ENCODE measurements at regions of chr2 and their contacts with region 1.

Region 1: GRCh38 chr2:190180313-190181122 is 118.0 kb upstream of the MSTN start:
- DNase-seq: peak; percentile 88
- H3K4me3 ChIP-seq: peak overlapping the region; percentile 62 to 66
- H3K27ac ChIP-seq: no peak overlapping the region; a peak in 1 of 4 replicates
- H3K4me1 ChIP-seq: peaks cover 0 to 12% of the 10 kb centered on the region in 2 experiments; a peak in 2 of 4 replicates
- H3K27me3 ChIP-seq: no peaks in the 10 kb centered on the region
- CTCF ChIP-seq: peak; percentile 45
- EP300 ChIP-seq: no peak
- RAD21 ChIP-seq: no peak

Region 2: GRCh38 chr2:189880832-189881492 is 299.6 kb before region 1 on chr2:
- CTCF ChIA-PET with region 1: no interaction called
- POLR2A ChIA-PET with region 1: no interaction called
- DNase-seq: no peak
- H3K4me3 ChIP-seq: no peak overlapping the region
- H3K27ac ChIP-seq: no peak overlapping the region
- H3K4me1 ChIP-seq: no peaks in the 10 kb centered on the region; a peak in 1 of 4 replicates
- H3K27me3 ChIP-seq: no peaks in the 10 kb centered on the region
- CTCF ChIP-seq: no peak
- EP300 ChIP-seq: no peak
- RAD21 ChIP-seq: no peak

Region 3: DNA sequence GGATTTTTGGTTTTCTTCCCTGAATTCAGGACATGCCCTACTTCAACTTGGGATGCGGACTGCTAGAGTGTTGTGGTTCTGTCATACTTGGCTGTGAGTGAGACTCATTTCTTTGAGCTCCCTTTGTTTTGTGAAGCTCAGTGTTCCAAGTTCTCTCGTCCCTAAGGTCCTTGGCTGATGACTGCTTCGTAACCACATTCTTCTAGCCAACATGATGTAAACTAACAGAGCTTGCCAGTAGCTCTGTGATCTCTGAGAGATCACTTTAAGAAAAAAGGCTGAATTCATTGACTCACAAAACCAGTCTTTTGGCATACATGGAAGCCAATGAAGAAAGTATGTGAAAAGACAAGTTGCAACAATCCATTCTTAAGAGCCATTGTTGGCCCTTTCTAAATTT is 21.1 kb before region 1 on chr2:
- CTCF ChIA-PET with region 1: interaction called, 25 read pairs
- POLR2A ChIA-PET with region 1: no interaction called
- DNase-seq: no peak
- H3K4me3 ChIP-seq: no peak overlapping the region
- H3K27ac ChIP-seq: no peak overlapping the region
- H3K4me1 ChIP-seq: no peaks in the 10 kb centered on the region
- H3K27me3 ChIP-seq: no peaks in the 10 kb centered on the region
- CTCF ChIP-seq: no peak
- EP300 ChIP-seq: no peak
- RAD21 ChIP-seq: no peak

Region 4: DNA sequence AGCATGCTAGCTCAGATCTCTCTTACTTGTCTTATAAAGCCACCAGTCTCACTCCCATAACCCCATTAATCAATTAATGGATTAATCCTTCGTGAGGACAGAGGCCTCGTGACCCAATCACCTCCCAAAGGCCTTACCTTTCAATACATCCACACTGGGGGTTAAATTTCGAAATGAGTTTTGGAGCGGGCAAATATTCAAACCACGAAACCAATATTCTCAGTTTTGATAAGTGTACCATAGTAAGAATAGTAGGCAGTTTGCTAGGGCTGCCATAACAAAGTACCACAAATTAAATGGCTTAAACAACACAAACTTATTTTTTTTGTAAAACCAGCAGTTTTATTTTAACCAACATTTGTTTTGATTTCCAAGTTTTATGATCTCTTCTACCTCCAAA is 123.9 kb after region 1 on chr2:
- CTCF ChIA-PET with region 1: no interaction called
- POLR2A ChIA-PET with region 1: no interaction called
- DNase-seq: no peak
- H3K4me3 ChIP-seq: no peak overlapping the region
- H3K27ac ChIP-seq: no peak overlapping the region
- H3K4me1 ChIP-seq: no peaks in the 10 kb centered on the region
- H3K27me3 ChIP-seq: no peaks in the 10 kb centered on the region
- CTCF ChIP-seq: no peak
- EP300 ChIP-seq: no peak
- RAD21 ChIP-seq: no peak